ENCODE measurements at regions of chr22 and their contacts with region 1.

Region 1: GRCh38 chr22:49930739-49931412 is 12.4 kb downstream of the CRELD2 start:
- DNase-seq: peak; percentile 72
- ATAC-seq: peak; percentile 30 to 48

Region 2: GRCh38 chr22:49894322-49895054 is 36.4 kb before region 1 on chr22:
- intact Hi-C with region 1: no loop called
- DNase-seq: no peak
- ATAC-seq: peak in 1 of 2 donors; percentile 34

Region 3: DNA sequence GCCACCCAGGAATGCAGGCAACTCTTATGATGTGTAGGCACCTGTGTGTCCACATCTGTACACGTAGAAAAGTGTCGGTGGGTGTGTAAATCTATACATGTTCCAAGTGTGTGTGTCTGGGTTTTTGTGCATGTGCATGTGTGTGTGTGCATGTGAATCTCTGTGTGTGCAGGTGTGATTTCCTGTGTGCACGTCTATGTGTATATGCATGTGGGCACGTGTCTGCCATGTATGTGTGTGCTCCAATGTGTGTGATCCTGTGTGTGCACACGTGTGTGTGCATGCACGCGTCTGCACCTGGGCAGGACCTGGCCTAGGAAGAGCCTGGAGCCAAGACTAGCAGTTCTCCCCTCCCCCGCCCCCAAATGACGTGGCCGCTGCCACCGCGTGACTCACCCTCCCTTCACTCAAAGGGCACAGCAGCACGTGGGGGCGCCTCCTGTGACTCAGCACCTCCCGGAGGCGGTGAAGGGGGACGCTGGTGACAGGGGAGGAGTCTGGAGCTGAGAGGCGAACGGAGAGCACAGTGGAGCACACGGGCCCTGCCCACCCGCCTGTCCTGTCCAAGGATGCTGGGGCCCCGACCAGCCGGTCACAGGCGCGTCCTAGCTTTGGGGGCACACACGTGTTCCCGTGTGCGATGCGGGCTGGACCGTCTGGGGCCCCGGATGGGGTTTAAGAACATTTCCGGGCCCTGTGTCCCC is 39.8 kb after region 1 on chr22:
- intact Hi-C with region 1: loop called in 1 of 2 experiments (anchors 5 kb)
- DNase-seq: peak; percentile 97
- ATAC-seq: peak; percentile 83 to 90

Region 4: GRCh38 chr22:49992921-49993648 is 62.2 kb after region 1 on chr22:
- intact Hi-C with region 1: loop called (anchors 1 to 5 kb)
- DNase-seq: peak; percentile 74
- ATAC-seq: peak; percentile 71 to 82

Region 5: DNA sequence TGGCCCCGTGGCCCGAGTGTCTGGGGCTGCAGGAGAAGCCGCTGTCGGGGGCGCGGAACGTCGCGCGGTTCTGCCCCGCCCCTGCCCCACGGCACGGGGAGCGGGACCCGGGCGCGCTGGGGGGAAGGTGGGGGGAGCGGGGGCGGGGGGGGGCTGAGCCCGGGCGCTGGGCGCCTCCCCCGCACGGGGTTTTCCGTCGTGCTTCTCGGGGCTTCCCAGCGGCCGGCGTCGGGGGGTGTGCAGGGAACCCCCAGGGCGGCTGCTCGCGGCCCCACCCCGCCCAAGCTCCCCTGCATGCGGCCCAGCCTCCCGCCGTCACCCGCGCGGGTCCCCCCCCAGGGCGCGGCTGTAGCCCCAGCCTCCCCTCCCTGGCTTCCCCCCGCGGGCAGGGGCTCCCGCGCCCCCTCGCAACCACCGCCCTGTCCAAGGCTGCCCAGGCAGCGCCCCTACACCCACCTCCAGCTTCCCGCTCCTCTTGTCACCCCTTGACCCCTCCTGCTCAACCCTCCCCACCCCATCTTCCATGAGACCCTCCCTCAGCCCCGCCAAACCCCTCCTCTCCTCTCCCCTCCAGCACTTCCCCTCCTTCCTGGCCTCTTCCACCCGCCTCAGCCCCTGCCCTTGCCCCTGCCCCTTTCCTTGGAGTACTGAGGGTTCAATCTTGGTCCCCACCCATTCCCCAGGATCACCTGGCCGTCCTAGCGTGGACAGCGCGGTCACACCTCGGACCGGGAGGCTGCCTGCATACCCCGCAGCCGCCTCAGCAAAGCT is 80.0 kb after region 1 on chr22:
- intact Hi-C with region 1: no loop called
- DNase-seq: no peak
- ATAC-seq: no peak

Region 6: DNA sequence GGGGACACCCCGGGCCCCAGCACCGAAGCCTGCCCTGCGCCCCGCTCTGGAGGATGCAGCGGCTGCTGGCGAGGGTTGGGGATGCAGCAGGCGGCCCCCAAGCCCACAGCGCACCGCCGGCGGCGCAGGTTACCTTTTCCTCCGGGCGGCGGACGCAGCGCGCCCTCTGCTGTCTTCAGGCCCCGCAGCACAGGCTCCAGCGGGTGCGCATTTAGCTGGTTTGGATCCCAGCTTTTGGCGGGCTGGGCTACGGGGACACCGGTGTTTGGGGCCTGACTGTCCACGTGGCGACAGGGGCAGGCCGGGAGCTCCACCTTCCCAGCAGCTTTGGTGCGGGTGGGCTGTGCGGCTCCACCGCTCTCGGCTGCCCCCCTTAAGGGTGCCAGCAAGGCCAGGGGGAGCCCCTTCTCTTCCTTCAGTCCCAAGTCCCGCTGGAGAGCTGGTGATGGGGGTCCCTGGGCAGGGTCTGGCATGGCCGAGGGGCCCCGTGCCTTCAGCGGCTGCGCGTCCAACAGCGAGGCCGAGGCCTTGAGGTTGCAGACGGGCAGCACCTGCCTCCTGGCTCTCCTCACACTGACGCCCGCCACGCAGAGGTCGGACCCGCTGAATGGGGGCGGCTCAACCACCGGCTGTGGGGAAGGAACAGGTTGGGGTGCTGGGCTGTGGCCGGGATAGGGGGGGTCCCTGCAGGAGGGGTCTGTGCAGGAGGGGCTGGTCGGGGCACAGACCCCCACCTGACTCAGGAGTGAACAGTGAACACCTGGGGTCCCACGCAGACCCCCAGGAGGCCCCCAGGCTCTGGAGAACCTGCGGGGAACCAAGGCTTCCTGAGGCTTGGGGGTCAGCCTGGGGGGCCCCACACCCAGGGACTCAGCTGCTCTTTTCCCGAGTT is 99.7 kb after region 1 on chr22:
- intact Hi-C with region 1: loop called (anchors 1 to 2 kb)
- DNase-seq: peak; percentile 82
- ATAC-seq: peak; percentile 92 to 95

Region 7: DNA sequence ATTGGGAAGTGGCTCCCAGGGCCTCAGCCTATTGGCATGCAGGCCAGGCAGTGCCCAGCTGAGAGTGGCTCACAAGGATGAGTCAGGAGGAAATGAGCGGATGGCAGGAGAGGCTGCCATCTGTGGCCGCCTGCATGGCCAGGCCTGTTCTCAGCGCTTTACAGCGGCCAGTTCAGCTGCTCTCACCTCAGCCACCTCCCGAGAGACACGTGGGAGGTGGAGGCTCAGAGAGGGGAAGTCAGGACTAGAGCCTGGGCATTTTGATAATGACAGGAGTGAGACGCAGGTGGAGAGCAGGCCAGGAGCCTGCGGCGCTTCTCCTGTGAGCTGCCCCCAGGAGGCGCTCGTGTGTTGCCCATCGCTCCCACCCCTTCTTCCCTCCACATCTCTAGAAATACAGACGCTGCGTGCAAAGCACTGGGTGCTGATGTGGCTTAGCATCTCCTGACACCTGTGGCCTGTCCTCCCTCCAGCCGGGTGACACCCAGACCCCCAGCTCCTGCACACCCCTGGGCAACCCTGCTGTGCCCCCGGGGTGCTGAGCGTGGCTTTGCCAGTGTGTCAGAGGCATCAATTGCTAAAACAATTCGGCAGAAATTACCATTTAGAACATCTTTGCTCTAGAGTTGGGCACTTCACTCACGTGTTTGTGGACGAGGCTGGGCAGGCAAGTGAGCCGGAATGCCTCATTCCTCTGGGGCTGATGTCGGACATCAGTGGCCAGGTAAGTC is 218.3 kb after region 1 on chr22:
- intact Hi-C with region 1: loop called in 1 of 2 experiments (anchors 5 kb)
- DNase-seq: peak; percentile 42
- ATAC-seq: peak; percentile 60 to 68